ENCODE measurements at regions of chr10 and their contacts with region 1.

Region 1: DNA sequence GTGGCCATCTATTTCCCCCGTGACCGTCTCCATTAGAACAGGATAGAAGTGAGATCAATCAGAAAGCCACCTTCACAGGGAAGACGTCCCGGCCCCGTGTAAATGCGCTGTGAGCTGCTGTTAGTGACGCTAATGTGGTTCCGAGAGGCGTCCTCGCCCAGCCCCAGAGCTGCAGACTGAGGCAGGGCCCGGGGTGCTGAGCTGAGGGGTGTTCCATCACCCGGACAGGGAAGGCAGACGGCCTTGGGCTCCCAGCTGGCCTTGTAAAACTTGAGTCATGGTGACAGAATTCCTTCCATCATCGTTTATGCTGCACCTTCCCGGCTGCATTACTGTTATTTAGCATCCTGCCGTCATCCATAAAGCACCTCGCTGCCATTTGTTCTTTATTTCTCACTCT is 195.3 kb upstream of the CTBP2 start:
- DNase-seq: no peak
- H3K4me3 ChIP-seq: no peak overlapping the region
- CTCF ChIP-seq: no peak

Region 2: DNA sequence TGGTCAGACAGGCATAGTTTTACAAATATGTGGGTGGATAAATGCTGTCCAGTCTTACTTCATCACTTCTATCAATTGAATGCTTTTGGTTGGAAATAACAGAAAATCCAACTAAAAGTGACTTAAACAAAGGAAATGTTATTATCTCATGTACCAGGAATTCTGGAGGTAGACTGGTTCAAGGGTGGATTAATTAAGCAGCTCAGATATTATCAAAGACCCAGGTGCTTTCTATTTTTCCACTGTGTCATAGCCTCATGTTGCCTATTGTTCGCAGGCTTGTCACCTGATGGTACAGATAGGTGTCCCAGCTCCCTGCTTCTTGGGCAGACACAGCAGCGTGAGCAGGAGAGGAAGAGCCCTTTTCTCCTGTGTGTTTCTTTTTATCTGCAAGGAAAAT is 39.2 kb before region 1 on chr10:
- CTCF ChIA-PET with region 1: no interaction called
- POLR2A ChIA-PET with region 1: no interaction called
- DNase-seq: no peak
- H3K4me3 ChIP-seq: no peak overlapping the region
- CTCF ChIP-seq: no peak

Region 3: GRCh38 chr10:125343118-125343925 is 12.3 kb before region 1 on chr10:
- CTCF ChIA-PET with region 1: interaction called, 13 read pairs
- POLR2A ChIA-PET with region 1: no interaction called
- DNase-seq: no peak
- H3K4me3 ChIP-seq: no peak overlapping the region
- CTCF ChIP-seq: peak; percentile 58

Region 4: GRCh38 chr10:125370578-125370977 is 14.9 kb after region 1 on chr10:
- CTCF ChIA-PET with region 1: no interaction called
- POLR2A ChIA-PET with region 1: no interaction called
- DNase-seq: no peak
- H3K4me3 ChIP-seq: no peak overlapping the region
- CTCF ChIP-seq: no peak

Measured in AG04449 (cell line).